Calu3 (cell line): ENCODE measurements at regions of chr1 and their contacts with region 1.

Region 1: GRCh38 chr1:65965112-65966008 is 172.7 kb downstream of the PDE4B start:
- DNase-seq: no peak
- H3K4me3 Mint-ChIP-seq: no peak overlapping the region
- H3K27ac Mint-ChIP-seq: no peak overlapping the region
- H3K4me1 Mint-ChIP-seq: peaks cover 15% of the 10 kb centered on the region
- H3K27me3 Mint-ChIP-seq: no peaks in the 10 kb centered on the region
- CTCF ChIP-seq: no peak

Region 2: GRCh38 chr1:65590279-65590678 is 375.1 kb before region 1 on chr1:
- CTCF ChIA-PET with region 1: no interaction called
- intact Hi-C with region 1: no loop called
- DNase-seq: no peak
- H3K4me3 Mint-ChIP-seq: no peak overlapping the region
- H3K27ac Mint-ChIP-seq: no peak overlapping the region
- H3K4me1 Mint-ChIP-seq: no peaks in the 10 kb centered on the region
- H3K27me3 Mint-ChIP-seq: no peaks in the 10 kb centered on the region
- CTCF ChIP-seq: no peak

Region 3: GRCh38 chr1:65979136-65980044 is 14.0 kb after region 1 on chr1:
- CTCF ChIA-PET with region 1: interaction called, 14 read pairs
- intact Hi-C with region 1: loop called (anchors 2 kb)
- DNase-seq: peak; percentile 53
- H3K4me3 Mint-ChIP-seq: peak overlapping the region; percentile 18
- H3K27ac Mint-ChIP-seq: peak overlapping the region; percentile 56
- H3K4me1 Mint-ChIP-seq: peaks cover 17% of the 10 kb centered on the region
- H3K27me3 Mint-ChIP-seq: no peaks in the 10 kb centered on the region
- CTCF ChIP-seq: no peak

Region 4: GRCh38 chr1:66119148-66119547 is 153.8 kb after region 1 on chr1:
- CTCF ChIA-PET with region 1: no interaction called
- intact Hi-C with region 1: no loop called
- DNase-seq: no peak
- H3K4me3 Mint-ChIP-seq: no peak overlapping the region
- H3K27ac Mint-ChIP-seq: no peak overlapping the region
- H3K4me1 Mint-ChIP-seq: no peaks in the 10 kb centered on the region
- H3K27me3 Mint-ChIP-seq: no peaks in the 10 kb centered on the region
- CTCF ChIP-seq: no peak